OCI-LY7 (cell line): ENCODE measurements at regions of chr16 and their contacts with region 1.

Region 1: DNA sequence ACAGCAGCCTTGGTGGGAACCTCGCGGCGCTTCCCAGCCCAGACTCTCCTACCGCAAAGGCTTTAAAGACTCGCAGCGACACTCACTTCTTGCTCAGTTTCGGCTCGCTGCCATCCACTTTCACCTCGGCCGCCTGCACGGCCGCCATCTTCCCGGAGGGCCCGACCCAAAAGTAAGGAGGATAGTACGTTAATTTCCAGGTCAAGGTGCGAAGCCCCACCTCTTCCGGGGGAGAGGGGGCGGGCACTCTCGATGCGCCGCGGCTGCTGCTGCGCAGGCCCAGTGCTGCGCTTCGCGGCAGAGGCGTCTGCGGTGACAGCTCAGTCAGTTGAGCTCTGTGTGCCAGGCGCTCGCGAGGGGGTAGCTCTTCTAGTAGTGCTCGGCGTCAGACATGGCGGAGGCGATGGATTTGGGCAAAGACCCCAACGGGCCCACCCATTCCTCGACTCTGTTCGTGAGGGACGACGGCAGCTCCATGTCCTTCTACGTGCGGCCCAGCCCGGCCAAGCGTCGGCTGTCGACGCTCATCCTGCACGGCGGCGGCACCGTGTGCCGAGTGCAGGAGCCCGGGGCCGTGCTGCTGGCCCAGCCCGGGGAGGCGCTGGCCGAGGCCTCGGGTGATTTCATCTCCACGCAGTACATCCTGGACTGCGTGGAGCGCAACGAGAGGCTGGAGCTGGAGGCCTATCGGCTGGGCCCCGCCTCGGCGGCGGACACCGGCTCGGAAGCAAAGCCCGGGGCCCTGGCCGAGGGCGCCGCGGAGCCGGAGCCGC is at the starts of genes KARS1 and TERF2IP:
- DNase-seq: peak; percentile 93
- H3K4me3 ChIP-seq: peak within 1 kb of the TSS; percentile 88
- H3K27ac ChIP-seq: peak within 1 kb of the TSS; percentile 82
- H3K4me1 ChIP-seq: peaks cover 57% of the 10 kb centered on the region
- CTCF ChIP-seq: no peak
- total RNA-seq, gene KARS1: 126 and 143 TPM in 2 replicates
- total RNA-seq, gene TERF2IP: 41.6 and 42.3 TPM in 2 replicates

Region 2: DNA sequence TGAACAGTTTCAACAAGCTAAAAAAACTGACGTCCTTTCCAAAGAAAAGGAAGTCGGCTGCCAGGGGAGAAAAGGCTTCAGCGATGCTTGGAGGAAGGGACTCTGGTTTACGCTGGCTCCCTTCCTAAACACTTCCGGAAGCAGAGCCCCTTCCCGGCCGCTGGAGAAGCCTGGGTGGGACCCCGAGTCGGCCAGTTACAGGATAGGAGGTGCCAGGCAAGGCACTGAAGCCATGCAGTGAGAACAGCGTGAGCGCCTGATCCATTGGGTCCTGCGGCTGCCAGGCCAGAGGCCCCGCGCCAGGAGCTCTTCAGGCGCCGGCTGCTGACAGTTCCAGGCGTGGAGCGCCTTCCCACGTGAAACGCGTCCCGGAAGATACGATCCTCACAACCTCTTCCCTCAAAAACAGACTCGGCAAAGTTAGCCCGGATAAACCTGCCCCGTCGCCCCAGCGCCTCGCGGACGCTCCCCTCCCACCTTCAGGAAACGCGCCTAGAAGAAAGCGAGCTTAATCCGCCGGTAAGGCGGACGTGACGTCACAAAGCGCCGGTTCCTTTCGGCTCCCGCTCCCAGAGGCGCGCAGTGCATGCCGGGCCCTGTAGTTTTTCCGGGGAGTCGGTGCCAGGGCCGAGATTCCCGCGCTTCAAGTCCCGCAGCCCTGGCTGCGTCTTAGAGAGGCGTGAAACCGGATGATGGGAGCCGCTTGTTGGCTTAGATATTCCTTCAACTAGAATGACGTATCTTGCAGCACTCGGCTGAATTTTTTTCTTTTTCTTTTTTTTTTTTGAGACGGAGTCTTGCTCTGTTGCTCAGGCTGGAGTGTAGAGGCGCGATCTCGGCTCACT is 24.7 kb before region 1 on chr16 and contains the start of gene ADAT1:
- CTCF ChIA-PET with region 1: no interaction called
- POLR2A ChIA-PET with region 1: interaction called, 21 read pairs
- intact Hi-C with region 1: loop called (anchors 1 kb)
- DNase-seq: peak; percentile 98
- H3K4me3 ChIP-seq: peak within 1 kb of the TSS; percentile 82
- H3K27ac ChIP-seq: peak within 1 kb of the TSS; percentile 59
- H3K4me1 ChIP-seq: peaks cover 22% of the 10 kb centered on the region
- CTCF ChIP-seq: no peak
- total RNA-seq, gene ADAT1: 46.8 and 53.4 TPM in 2 replicates

Region 3: GRCh38 chr16:76500006-76500405 is 852.3 kb after region 1 on chr16:
- CTCF ChIA-PET with region 1: no interaction called
- POLR2A ChIA-PET with region 1: no interaction called
- intact Hi-C with region 1: no loop called
- DNase-seq: no peak
- H3K4me3 ChIP-seq: no peak overlapping the region
- H3K27ac ChIP-seq: no peak overlapping the region
- H3K4me1 ChIP-seq: no peaks in the 10 kb centered on the region
- CTCF ChIP-seq: no peak